ENCODE measurements at regions of chr1 and their contacts with region 1.

Region 1: GRCh38 chr1:66503841-66504470 is 30.0 kb upstream of the SGIP1 start:
- DNase-seq: peak; percentile 88
- H3K4me3 ChIP-seq: no peak overlapping the region
- H3K27ac ChIP-seq: no peak overlapping the region
- H3K4me1 ChIP-seq: peaks cover 5% of the 10 kb centered on the region
- H3K27me3 ChIP-seq: no peaks in the 10 kb centered on the region
- CTCF ChIP-seq: peak; percentile 58 to 76
- POLR2A ChIP-seq: no peak

Region 2: GRCh38 chr1:65958561-65959350 is 545.2 kb before region 1 on chr1:
- CTCF ChIA-PET with region 1: interaction called, 7 read pairs
- POLR2A ChIA-PET with region 1: no interaction called
- dilution Hi-C with region 1: no loop called
- intact Hi-C with region 1: loop called (anchors 2 kb)
- DNase-seq: peak; percentile 73
- H3K4me3 ChIP-seq: no peak overlapping the region
- H3K27ac ChIP-seq: no peak overlapping the region
- H3K4me1 ChIP-seq: peaks cover 10% of the 10 kb centered on the region
- H3K27me3 ChIP-seq: no peaks in the 10 kb centered on the region
- CTCF ChIP-seq: peak; percentile 21 to 29
- POLR2A ChIP-seq: no peak

Region 3: DNA sequence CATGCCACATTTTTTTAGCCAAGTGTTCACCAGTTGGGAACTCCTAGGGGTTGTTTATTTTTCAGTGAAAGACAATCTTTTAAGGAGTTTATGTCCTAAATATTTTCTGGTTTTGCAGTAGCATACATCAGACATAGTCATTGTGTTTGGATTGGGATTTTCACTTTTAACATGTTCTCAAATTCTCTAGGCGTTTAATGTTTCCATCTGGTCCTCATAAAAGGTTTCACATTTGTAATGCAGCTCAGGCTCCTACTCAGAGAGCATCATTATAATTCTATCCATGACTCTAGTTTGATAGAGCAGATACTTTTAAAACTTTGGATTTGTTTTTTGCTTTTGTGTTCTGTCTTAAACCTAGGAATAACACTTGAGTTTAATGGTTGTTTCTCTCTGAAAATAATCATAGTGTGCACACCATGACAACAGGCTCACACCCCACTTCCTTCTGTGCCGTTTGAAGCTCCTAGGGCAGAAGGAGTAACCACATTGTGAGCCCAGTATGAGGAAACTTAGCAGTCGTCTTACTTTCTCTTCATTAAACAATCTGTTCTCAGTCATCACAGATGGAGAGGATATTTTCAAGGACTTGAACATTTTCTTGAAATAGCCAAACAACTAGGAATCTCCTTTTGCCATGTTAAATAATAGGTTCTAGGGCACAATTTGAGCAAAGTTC is 491.7 kb before region 1 on chr1:
- CTCF ChIA-PET with region 1: no interaction called
- POLR2A ChIA-PET with region 1: no interaction called
- dilution Hi-C with region 1: no loop called
- intact Hi-C with region 1: no loop called
- DNase-seq: no peak
- H3K4me3 ChIP-seq: no peak overlapping the region
- H3K27ac ChIP-seq: no peak overlapping the region
- H3K4me1 ChIP-seq: no peaks in the 10 kb centered on the region
- H3K27me3 ChIP-seq: peaks cover 0 to 2% of the 10 kb centered on the region in 2 experiments
- CTCF ChIP-seq: no peak
- POLR2A ChIP-seq: no peak

Region 4: DNA sequence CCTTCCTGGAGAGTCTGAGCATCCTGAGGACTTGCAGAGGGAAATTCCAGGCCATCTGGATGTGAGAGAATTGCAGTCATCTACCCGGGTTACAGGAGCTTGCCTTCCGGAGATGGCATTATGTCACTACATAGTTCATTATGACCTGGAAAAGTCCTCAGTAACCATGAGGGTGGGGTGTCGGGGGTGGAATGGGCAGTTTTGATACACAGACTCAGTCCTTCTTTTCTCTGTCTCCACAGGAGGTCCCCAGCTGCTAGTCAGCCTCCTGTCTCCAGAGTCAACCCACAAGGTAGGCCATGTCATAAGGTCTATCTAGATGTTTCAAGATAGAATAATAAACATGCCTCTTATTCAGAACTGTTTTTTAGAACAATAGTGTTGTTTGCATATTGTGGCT is 238.2 kb before region 1 on chr1:
- CTCF ChIA-PET with region 1: interaction called, 5 read pairs
- POLR2A ChIA-PET with region 1: no interaction called
- dilution Hi-C with region 1: no loop called
- intact Hi-C with region 1: loop called (anchors 2 kb)
- DNase-seq: peak; percentile 83
- H3K4me3 ChIP-seq: no peak overlapping the region
- H3K27ac ChIP-seq: peak overlapping the region; percentile 89
- H3K4me1 ChIP-seq: peaks cover 66% of the 10 kb centered on the region
- H3K27me3 ChIP-seq: no peaks in the 10 kb centered on the region
- CTCF ChIP-seq: no peak
- POLR2A ChIP-seq: no peak

Region 5: GRCh38 chr1:66395202-66396061 is 108.5 kb before region 1 on chr1:
- CTCF ChIA-PET with region 1: no interaction called
- POLR2A ChIA-PET with region 1: no interaction called
- dilution Hi-C with region 1: no loop called
- intact Hi-C with region 1: no loop called
- DNase-seq: no peak
- H3K4me3 ChIP-seq: no peak overlapping the region
- H3K27ac ChIP-seq: no peak overlapping the region
- H3K4me1 ChIP-seq: no peaks in the 10 kb centered on the region
- H3K27me3 ChIP-seq: no peaks in the 10 kb centered on the region
- CTCF ChIP-seq: no peak
- POLR2A ChIP-seq: no peak

Region 6: GRCh38 chr1:66452162-66452561 is 51.8 kb before region 1 on chr1:
- CTCF ChIA-PET with region 1: interaction called, 102 read pairs
- POLR2A ChIA-PET with region 1: no interaction called
- dilution Hi-C with region 1: no loop called
- intact Hi-C with region 1: loop called (anchors 1 kb)
- DNase-seq: peak; percentile 33
- H3K4me3 ChIP-seq: no peak overlapping the region
- H3K27ac ChIP-seq: no peak overlapping the region
- H3K4me1 ChIP-seq: no peaks in the 10 kb centered on the region
- H3K27me3 ChIP-seq: no peaks in the 10 kb centered on the region
- CTCF ChIP-seq: peak; percentile 22 to 25
- POLR2A ChIP-seq: no peak

Region 7: DNA sequence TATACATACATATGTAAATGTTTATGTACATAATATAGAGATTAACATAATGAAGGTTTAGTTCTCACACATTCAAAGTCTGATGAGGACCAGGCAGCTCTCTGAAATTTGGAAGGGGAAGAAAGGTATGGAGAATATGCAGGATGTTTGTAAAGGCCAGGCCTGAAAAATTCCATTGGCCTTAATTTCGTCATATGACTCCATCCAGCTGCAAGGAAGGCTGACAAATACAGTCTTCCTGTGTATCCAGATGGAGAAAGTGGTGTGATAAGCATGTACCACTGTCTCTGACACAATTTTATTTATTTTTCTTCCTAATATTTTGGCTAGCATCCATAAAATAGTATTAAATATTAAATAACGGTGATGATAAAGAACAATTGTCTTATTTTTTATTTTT is 23.7 kb after region 1 on chr1:
- CTCF ChIA-PET with region 1: interaction called, 19 read pairs
- POLR2A ChIA-PET with region 1: interaction called, 3 read pairs
- dilution Hi-C with region 1: no loop called
- intact Hi-C with region 1: loop called (anchors 1 kb)
- DNase-seq: peak; percentile 91
- H3K4me3 ChIP-seq: no peak overlapping the region
- H3K27ac ChIP-seq: peak overlapping the region; percentile 81
- H3K4me1 ChIP-seq: peaks cover 35% of the 10 kb centered on the region
- H3K27me3 ChIP-seq: no peaks in the 10 kb centered on the region
- CTCF ChIP-seq: no peak
- POLR2A ChIP-seq: peak; percentile 47

Region 8: GRCh38 chr1:66563094-66563800 is 59.3 kb after region 1 on chr1:
- CTCF ChIA-PET with region 1: interaction called, 8 read pairs
- POLR2A ChIA-PET with region 1: interaction called, 4 read pairs
- dilution Hi-C with region 1: no loop called
- intact Hi-C with region 1: loop called (anchors 1 kb)
- DNase-seq: peak; percentile 97
- H3K4me3 ChIP-seq: peak overlapping the region in 1 of 3 experiments; percentile 23
- H3K27ac ChIP-seq: peak overlapping the region; percentile 98
- H3K4me1 ChIP-seq: peaks cover 29% of the 10 kb centered on the region
- H3K27me3 ChIP-seq: no peaks in the 10 kb centered on the region
- CTCF ChIP-seq: no peak
- POLR2A ChIP-seq: peak; percentile 53

Measured in endothelial cell of umbilical vein (primary cell).